Spleen (tissue), 13 donors: ENCODE measurements at regions of chr14 and their contacts with region 1.

Region 1: GRCh38 chr14:75293920-75294642 is 15.5 kb downstream of the FOS start:
- DNase-seq: peak; percentile 98
- H3K4me3 ChIP-seq: peak overlapping the region; percentile 38 to 83 (median 60)
- H3K27ac ChIP-seq: peak overlapping the region; percentile 60 to 97 (median 90)
- H3K4me1 ChIP-seq: peaks cover 17 to 58% (median 36%) of the 10 kb centered on the region in 6 donors
- H3K27me3 ChIP-seq: no peaks in the 10 kb centered on the region
- CTCF ChIP-seq: peak in 2 of 11 experiments; percentile 14 to 26
- POLR2A ChIP-seq: no peak

Region 2: DNA sequence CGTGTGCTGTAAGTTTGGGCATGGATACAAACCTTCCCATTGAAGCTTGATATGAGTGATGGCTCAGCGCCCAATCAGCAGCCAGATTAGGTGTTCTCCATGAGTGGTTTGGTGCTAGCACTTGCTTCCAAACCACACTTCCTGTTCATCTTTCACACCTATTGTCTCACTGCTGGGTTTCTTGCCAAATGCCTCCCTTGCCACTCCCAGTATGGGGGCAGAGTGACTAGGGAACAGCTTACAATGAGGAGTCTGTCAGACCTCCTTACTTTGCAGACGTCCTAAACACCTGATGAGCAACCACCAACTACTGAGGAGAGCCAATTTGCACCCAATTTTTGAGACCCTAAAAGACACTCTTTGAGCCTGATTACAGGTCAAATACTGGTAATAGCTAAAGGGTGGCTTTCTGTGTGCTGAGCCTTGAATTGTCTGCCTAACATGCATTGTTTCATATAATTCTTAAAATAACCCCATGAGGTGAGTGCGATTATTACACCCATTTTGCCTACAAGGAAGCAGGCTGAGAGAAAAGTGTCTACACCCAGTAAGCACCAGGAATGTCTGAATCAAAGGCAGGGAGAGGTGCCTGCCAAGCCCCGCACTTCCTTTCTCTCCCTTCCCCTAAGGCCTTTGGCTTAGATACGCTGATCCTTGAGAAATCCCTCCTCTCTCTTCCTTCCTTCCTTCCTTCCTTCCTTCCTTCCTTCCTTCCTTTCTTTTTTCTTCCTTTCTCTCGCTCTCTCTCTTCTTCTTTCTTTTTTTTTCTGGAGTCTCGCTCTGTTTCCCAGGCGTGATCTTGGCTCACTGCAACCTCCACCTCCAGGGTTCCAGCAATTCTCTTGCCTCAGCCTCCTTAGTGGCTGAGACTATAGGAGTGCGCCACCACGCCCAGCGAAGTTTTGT is 63.7 kb before region 1 on chr14:
- intact Hi-C with region 1: loop called (anchors 10 kb)
- DNase-seq: peak; percentile 87
- H3K4me3 ChIP-seq: no peak overlapping the region
- H3K27ac ChIP-seq: peak overlapping the region in 7 of 8 donors; percentile 12 to 79 (median 61)
- H3K4me1 ChIP-seq: peaks cover 15 to 81% (median 49%) of the 10 kb centered on the region in 6 donors
- H3K27me3 ChIP-seq: no peaks in the 10 kb centered on the region
- CTCF ChIP-seq: peak in 4 of 11 experiments; percentile 16 to 40 (median 27)
- POLR2A ChIP-seq: no peak